HepG2 (cell line): ENCODE measurements at regions of chr11 and their contacts with region 1.

Region 1: DNA sequence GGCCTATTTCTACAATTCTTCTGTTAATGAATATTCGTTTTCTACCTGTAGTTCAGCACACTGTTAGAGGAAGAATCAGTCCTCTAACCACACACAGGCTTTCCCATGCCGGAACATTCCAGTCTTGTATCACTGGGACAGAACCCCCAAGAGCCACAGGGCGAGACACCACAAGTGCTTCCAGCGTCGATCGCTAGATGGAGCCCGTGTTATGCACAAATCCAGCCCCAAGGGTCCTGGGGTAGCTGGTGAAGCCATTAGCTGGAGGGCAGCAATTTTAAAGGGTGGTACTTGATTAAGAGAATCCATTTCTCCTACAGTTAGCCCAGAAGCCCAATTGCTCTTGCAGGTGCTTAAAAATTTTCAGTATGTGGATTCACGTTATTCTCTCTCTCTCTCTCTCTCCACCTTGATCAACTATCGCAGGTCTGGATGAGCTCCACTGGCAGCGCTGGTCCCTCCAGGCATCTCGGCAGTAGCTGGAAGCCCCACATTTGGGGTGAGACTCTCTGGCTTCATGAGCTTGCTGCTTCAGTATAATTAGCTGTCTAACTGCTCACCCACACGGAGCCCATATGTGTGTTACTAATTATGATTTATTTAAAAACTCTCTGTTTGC is 148.2 kb upstream of the SNX19 start:
- DNase-seq: peak; percentile 42
- ATAC-seq: peak; percentile 97
- H3K4me3 ChIP-seq: no peak overlapping the region
- H3K27ac ChIP-seq: no peak overlapping the region
- H3K4me1 ChIP-seq: no peaks in the 10 kb centered on the region
- H3K27me3 ChIP-seq: peaks cover 0 to 5% of the 10 kb centered on the region in 2 experiments; a peak in 1 of 5 replicates
- CTCF ChIP-seq: peak; percentile 89
- EP300 ChIP-seq: no peak
- POLR2A ChIP-seq: no peak
- RAD21 ChIP-seq: peak; percentile 73

Region 2: GRCh38 chr11:131217313-131218310 is 153.1 kb after region 1 on chr11:
- CTCF ChIA-PET with region 1: interaction called, 3 read pairs
- POLR2A ChIA-PET with region 1: no interaction called
- in situ Hi-C with region 1: loop called (anchors 10 kb)
- intact Hi-C with region 1: no loop called
- DNase-seq: no peak
- ATAC-seq: peak; percentile 56; the same call in 2 of the 3 replicates
- H3K4me3 ChIP-seq: no peak overlapping the region
- H3K27ac ChIP-seq: no peak overlapping the region
- H3K4me1 ChIP-seq: no peaks in the 10 kb centered on the region
- H3K27me3 ChIP-seq: peaks cover 0 to 6% of the 10 kb centered on the region in 2 experiments; a peak in 1 of 5 replicates
- CTCF ChIP-seq: peak; percentile 29; the same call in 1 of the 2 replicates
- EP300 ChIP-seq: no peak
- POLR2A ChIP-seq: no peak
- RAD21 ChIP-seq: no peak

Region 3: DNA sequence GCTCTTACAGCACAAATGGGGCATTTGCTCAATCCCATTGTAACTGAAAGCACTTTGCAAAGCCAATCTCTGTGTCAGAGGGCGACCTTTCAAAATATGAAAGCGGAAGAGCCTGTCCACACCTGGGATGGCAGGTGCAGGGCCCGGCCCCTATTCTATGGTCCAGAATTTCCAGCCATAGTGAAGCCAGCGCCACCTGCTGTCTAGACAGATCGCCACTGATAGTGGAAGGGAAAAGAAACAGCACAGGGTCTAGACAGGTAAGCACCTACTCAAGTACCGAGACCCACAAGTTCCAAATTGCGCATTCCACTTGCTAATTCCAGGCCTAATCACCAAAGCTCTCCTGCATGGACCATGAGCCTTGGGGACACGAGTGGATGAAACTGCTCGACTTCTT is 447.3 kb after region 1 on chr11:
- CTCF ChIA-PET with region 1: interaction called, 9 read pairs
- POLR2A ChIA-PET with region 1: no interaction called
- in situ Hi-C with region 1: loop called (anchors 5 kb)
- intact Hi-C with region 1: no loop called
- DNase-seq: peak; percentile 27
- ATAC-seq: peak; percentile 92
- H3K4me3 ChIP-seq: no peak overlapping the region
- H3K27ac ChIP-seq: no peak overlapping the region
- H3K4me1 ChIP-seq: no peaks in the 10 kb centered on the region
- H3K27me3 ChIP-seq: peaks cover 0 to 7% of the 10 kb centered on the region in 2 experiments; a peak in 1 of 5 replicates
- CTCF ChIP-seq: peak; percentile 72
- EP300 ChIP-seq: no peak
- POLR2A ChIP-seq: no peak
- RAD21 ChIP-seq: 0 out of 2 replicates have a peak, but pooled peaks have one; percentile 29